ENCODE measurements at regions of chr21 and their contacts with region 1.

Region 1: GRCh38 chr21:33205476-33205875 is 24.3 kb upstream of the IFNAR2 start:
- DNase-seq: peak; percentile 40 to 67
- ATAC-seq: peak; percentile 46 to 82 (median 74)
- H3K4me3 ChIP-seq: no peak overlapping the region
- H3K4me3 Mint-ChIP-seq: peak overlapping the region; percentile 79
- H3K27ac ChIP-seq: peak overlapping the region; percentile 74
- H3K27ac Mint-ChIP-seq: peak overlapping the region; percentile 88 to 89
- H3K4me1 ChIP-seq: peaks cover 57% of the 10 kb centered on the region
- H3K4me1 Mint-ChIP-seq: peaks cover 58 to 63% of the 10 kb centered on the region in 2 donors
- H3K27me3 ChIP-seq: no peaks in the 10 kb centered on the region
- H3K27me3 Mint-ChIP-seq: no peaks in the 10 kb centered on the region
- CTCF ChIP-seq: no peak

Region 2: GRCh38 chr21:33229784-33230544 is 24.5 kb after region 1 on chr21 and contains the start of gene IFNAR2:
- intact Hi-C with region 1: loop called (anchors 2 kb)
- DNase-seq: peak; percentile 75 to 84
- ATAC-seq: peak; percentile 75 to 91 (median 82)
- H3K4me3 ChIP-seq: peak within 1 kb of the TSS; percentile 94
- H3K4me3 Mint-ChIP-seq: peak within 1 kb of the TSS; percentile 90
- H3K27ac ChIP-seq: peak within 1 kb of the TSS; percentile 68
- H3K27ac Mint-ChIP-seq: peak within 1 kb of the TSS; percentile 88 to 97
- H3K4me1 ChIP-seq: peaks cover 25% of the 10 kb centered on the region
- H3K4me1 Mint-ChIP-seq: peaks cover 51 to 52% of the 10 kb centered on the region in 2 donors
- H3K27me3 ChIP-seq: no peaks in the 10 kb centered on the region
- H3K27me3 Mint-ChIP-seq: no peaks in the 10 kb centered on the region
- CTCF ChIP-seq: no peak
- total RNA-seq, gene IFNAR2: 65.4 to 105 (median 70.9) TPM

Region 3: DNA sequence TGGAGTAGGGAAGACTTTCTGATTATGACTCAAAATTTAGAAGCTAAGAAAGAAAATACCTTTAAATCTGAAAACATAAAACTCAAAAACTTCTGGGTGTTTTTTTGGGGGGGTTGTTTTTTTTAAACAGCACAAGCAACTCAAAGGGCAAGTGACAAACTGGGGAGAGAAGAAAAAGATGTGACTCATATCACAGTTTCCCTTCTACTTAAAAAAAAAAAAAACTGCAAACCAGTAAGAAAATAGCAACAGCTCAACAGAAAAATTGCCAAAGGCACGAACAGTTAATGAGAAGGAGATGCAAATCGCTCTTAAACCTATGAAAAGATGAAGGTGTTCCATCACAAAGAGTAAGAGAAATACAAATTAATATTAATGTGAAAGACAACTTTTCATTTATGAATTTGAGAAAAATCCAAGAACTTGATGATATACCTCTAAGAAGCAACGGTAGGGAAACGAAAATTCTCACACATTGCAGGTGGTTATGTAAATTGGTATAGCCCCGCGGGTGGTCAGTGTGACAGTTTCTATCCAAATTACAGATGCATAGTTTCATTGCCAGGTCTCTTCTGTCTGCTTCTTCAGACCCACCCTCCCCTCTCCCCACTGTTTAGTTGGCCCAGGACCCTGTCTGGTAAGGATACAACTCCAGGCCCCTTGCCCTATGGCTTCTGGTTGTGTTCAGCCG is 33.2 kb after region 1 on chr21:
- intact Hi-C with region 1: loop called (anchors 2 kb)
- DNase-seq: peak in 1 of 2 donors; percentile 64
- ATAC-seq: peak; percentile 67 to 78 (median 71)
- H3K4me3 ChIP-seq: no peak overlapping the region
- H3K4me3 Mint-ChIP-seq: peak overlapping the region; percentile 85
- H3K27ac ChIP-seq: peak overlapping the region; percentile 84
- H3K27ac Mint-ChIP-seq: peak overlapping the region; percentile 91 to 97
- H3K4me1 ChIP-seq: peaks cover 76% of the 10 kb centered on the region
- H3K4me1 Mint-ChIP-seq: peaks cover 83 to 86% of the 10 kb centered on the region in 2 donors
- H3K27me3 ChIP-seq: no peaks in the 10 kb centered on the region
- H3K27me3 Mint-ChIP-seq: no peaks in the 10 kb centered on the region
- CTCF ChIP-seq: no peak